AG04449 (cell line): ENCODE measurements at regions of chr3 and their contacts with region 1.

Region 1: DNA sequence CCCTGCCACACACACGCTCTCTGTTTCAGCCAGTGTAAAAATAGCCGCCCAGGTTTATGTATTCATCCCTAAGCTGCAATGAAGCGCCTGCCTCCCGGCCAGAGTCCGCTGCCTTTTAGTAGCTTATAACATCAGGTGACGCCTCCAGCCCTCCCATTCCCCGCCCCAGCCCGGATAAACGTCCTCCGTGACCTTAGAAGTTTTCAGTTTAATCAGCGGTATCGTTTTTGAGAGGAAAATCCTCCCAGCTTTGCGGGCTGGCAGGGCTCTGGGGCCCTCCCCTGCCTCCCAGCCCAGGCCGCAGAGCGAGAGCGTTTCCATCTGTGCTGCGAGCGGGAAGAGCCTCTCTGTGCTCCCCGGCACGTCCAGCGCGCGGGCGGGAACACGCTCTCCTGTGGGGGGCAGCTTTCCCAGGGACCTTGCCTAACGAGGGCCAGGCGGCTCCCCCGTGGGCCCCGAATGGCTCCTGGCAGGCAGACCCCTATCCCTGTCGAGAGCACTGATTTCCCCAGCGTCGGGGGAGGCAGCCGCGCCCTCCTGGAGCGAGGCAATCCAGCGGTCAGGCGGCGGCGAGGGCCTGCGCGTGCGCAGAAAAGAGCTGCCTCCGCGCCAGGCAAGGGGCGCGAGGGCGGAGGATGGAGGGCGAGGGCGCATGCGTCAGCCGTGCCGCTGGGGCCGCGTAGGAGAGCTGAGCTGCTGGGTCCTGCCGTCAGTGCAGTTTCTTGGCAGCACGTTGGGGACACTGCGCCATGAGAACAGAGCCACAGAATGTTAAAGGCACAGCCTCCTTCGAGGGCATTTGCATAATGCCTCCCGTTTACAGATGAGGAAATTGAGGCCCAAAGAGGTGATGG is 71.1 kb downstream of the CCNL1 start:
- DNase-seq: peak; percentile 68
- H3K4me3 ChIP-seq: peak overlapping the region; percentile 70
- CTCF ChIP-seq: peak; percentile 10

Region 2: DNA sequence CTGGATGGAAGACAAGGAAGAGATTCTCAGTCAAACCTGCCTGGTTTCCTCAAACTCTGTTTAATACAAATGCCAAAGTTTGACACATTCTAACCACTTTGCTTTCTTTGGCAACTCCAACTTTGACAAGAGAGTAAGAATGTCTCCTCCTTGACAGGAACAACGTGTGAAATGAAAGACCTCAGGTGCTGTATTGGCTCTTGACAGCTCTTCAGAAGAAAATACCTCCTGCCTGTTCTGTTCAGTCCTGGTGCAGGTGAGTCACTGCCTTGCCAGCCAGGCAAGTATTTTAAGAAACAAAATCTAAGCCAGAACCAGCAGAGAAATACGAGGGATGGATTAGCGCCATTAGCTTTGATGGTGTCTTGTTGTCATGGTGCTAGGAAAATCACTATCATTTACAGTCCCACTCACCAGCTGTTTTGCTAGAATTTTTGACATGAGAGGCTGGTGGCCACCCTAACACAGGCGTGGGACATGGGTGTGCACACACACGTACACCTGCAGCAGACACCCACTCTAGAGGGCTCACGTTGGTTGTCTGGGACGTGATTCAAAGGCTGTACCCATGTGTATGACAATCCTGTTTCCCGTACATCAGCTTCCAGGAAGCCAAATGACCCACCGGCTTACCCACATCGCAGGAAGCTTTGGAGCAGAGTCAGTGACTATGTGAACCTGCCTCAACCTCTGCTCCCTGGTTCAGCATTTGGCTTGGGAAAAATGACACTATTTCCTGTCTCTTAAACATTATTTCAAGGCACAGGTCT is 10.7 kb after region 1 on chr3:
- CTCF ChIA-PET with region 1: interaction called, 7 read pairs
- POLR2A ChIA-PET with region 1: interaction called, 13 read pairs
- DNase-seq: no peak
- H3K4me3 ChIP-seq: no peak overlapping the region
- CTCF ChIP-seq: no peak

Region 3: DNA sequence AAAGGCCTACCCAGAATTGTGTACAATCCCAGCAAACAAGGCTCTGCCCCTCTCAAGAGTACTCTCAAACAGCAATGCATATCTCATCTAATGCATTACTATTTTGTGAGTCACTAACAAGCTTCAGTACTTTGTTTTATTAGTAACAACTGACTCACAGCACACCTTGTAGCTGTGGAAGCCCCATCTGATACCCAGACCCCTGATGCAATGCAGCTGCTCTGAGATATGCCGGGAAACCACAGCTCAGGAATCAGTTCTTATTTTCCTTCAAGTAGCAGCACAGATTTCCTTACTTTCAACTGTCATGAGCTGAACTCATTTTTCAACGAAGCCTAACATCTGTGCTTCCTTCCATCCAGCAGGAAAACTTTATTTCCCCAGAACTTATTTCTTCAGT is 33.3 kb after region 1 on chr3:
- CTCF ChIA-PET with region 1: interaction called, 33 read pairs
- POLR2A ChIA-PET with region 1: interaction called, 3 read pairs
- DNase-seq: no peak
- H3K4me3 ChIP-seq: no peak overlapping the region
- CTCF ChIP-seq: no peak

Region 4: DNA sequence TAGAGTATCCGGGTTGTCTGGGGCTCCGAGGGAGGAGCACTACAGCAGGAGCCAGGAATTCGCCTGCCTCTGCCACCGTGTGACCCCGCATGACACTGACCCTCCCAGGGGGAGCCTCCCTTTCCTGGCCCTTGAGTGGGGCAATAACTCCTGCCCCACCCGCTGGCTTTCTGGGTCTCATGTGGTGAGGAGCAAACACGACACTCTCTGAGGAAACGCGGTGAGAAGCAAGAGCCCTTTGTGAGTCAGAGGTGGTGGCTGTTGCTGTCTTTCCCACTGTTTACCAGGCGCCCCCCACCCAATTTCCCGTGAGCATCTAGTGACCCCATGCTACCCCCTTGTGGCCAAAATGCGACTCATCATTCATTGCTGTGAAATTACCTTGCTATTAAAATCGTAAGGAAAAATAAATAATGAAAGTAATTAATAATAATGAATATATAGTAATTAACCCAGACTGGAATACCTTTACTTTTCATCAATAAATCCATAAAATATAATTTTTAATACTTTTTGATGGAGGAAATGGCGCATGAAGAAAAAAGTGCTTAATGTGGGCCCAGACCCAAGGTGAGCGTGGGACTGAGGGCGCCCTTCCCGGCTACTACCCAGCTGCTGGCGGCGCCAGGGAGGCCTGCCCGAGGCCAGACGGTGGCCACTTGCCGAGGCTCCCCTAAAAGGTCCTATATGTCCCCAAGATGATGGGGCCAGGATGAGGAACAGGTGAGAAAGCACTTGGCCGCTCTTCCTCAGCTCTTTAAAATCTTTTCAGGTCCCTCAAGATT is 41.8 kb after region 1 on chr3:
- CTCF ChIA-PET with region 1: interaction called, 90 read pairs
- POLR2A ChIA-PET with region 1: interaction called, 8 read pairs
- DNase-seq: no peak
- H3K4me3 ChIP-seq: no peak overlapping the region
- CTCF ChIP-seq: peak; percentile 53